CD4-positive, alpha-beta T cell (primary cell): ENCODE measurements at regions of chr4 and their contacts with region 1.

Region 1: GRCh38 chr4:45467157-45467556 is 656.7 kb downstream of the GABRG1 start:
- DNase-seq: no peak
- ATAC-seq: no peak
- H3K4me3 ChIP-seq: no peak overlapping the region
- H3K4me3 Mint-ChIP-seq: no peak overlapping the region
- H3K27ac ChIP-seq: no peak overlapping the region
- H3K27ac Mint-ChIP-seq: no peak overlapping the region
- H3K4me1 ChIP-seq: no peaks in the 10 kb centered on the region
- H3K4me1 Mint-ChIP-seq: no peaks in the 10 kb centered on the region
- H3K27me3 ChIP-seq: no peaks in the 10 kb centered on the region
- H3K27me3 Mint-ChIP-seq: no peaks in the 10 kb centered on the region
- CTCF ChIP-seq: no peak

Region 2: GRCh38 chr4:45530498-45530897 is 63.3 kb after region 1 on chr4:
- CTCF ChIA-PET with region 1: no interaction called
- POLR2A ChIA-PET with region 1: no interaction called
- intact Hi-C with region 1: loop called in 1 of 2 experiments (anchors 5 kb)
- DNase-seq: no peak
- ATAC-seq: no peak
- H3K4me3 ChIP-seq: no peak overlapping the region
- H3K4me3 Mint-ChIP-seq: no peak overlapping the region
- H3K27ac ChIP-seq: no peak overlapping the region
- H3K27ac Mint-ChIP-seq: no peak overlapping the region
- H3K4me1 ChIP-seq: no peaks in the 10 kb centered on the region
- H3K4me1 Mint-ChIP-seq: no peaks in the 10 kb centered on the region
- H3K27me3 ChIP-seq: no peaks in the 10 kb centered on the region
- H3K27me3 Mint-ChIP-seq: no peaks in the 10 kb centered on the region
- CTCF ChIP-seq: no peak